Natural killer cell (primary cell): ENCODE measurements at regions of chr11 and their contacts with region 1.

Region 1: DNA sequence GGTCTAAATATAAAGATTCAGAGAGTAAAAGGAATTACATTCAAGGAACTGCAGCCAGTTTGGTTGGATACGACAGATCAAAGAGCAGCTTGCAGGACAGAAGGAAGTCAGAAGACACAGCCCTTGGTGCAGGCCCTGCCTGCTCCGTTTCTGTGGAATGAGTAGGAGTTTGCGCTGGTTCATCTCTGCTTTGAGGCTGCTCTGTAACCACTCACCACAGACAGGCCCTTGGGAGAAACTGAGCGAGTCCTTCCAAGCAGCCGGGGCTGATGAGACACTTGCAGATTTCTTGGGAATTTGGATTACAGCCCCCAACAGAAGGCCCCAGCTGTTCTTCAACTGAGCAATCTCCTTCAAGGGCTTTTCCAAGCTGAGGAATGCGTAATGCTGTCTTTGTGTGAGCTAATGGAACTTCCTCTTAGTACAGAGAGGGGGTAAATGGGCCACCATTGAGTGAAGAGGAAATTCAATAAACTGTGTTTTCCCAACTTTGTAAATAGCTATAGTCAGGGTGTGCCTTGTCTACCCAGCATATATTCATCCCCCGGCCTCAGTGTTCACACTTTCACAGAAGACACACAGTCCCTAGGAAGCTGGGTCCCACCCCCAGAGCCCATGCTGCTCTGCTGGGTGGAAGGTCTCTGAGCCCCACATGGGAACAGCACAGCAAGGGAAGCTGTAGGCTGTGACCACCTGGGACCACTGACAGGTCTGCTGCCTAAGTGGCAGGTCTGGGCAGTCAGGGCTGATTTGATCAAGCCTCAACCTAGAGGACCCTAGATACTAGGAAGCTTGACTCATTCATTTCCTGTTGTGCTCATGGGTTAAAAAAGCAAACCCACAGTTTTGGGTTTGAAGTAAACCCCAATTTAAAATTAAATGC is 16.6 kb downstream of the IL10RA start:
- DNase-seq: peak in 1 of 2 donors; percentile 59
- ATAC-seq: peak; percentile 14 to 43 (median 21)
- H3K4me3 ChIP-seq: no peak overlapping the region
- H3K4me3 Mint-ChIP-seq: peak overlapping the region; percentile 87
- H3K27ac ChIP-seq: peak overlapping the region; percentile 75
- H3K27ac Mint-ChIP-seq: peak overlapping the region; percentile 93 to 97
- H3K4me1 ChIP-seq: peaks cover 98% of the 10 kb centered on the region
- H3K4me1 Mint-ChIP-seq: peaks cover 90 to 96% of the 10 kb centered on the region in 2 donors
- H3K27me3 ChIP-seq: no peaks in the 10 kb centered on the region
- H3K27me3 Mint-ChIP-seq: no peaks in the 10 kb centered on the region
- CTCF ChIP-seq: no peak

Region 2: GRCh38 chr11:116750070-116750718 is 1252.6 kb before region 1 on chr11:
- intact Hi-C with region 1: no loop called
- DNase-seq: no peak
- ATAC-seq: no peak
- H3K4me3 ChIP-seq: no peak overlapping the region
- H3K4me3 Mint-ChIP-seq: no peak overlapping the region
- H3K27ac ChIP-seq: no peak overlapping the region
- H3K27ac Mint-ChIP-seq: no peak overlapping the region
- H3K4me1 ChIP-seq: no peaks in the 10 kb centered on the region
- H3K4me1 Mint-ChIP-seq: peaks cover 0 to 5% of the 10 kb centered on the region in 2 donors
- H3K27me3 ChIP-seq: no peaks in the 10 kb centered on the region
- H3K27me3 Mint-ChIP-seq: no peaks in the 10 kb centered on the region
- CTCF ChIP-seq: no peak

Region 3: GRCh38 chr11:117953024-117953671 is 49.6 kb before region 1 on chr11:
- intact Hi-C with region 1: loop called (anchors 2 kb)
- DNase-seq: peak in 1 of 2 donors; percentile 76
- ATAC-seq: peak; percentile 38 to 46 (median 41)
- H3K4me3 ChIP-seq: peak overlapping the region; percentile 11
- H3K4me3 Mint-ChIP-seq: peak overlapping the region; percentile 68
- H3K27ac ChIP-seq: peak overlapping the region; percentile 66
- H3K27ac Mint-ChIP-seq: peak overlapping the region; percentile 89 to 96
- H3K4me1 ChIP-seq: peaks cover 66% of the 10 kb centered on the region
- H3K4me1 Mint-ChIP-seq: peaks cover 68 to 72% of the 10 kb centered on the region in 2 donors
- H3K27me3 ChIP-seq: no peaks in the 10 kb centered on the region
- H3K27me3 Mint-ChIP-seq: no peaks in the 10 kb centered on the region
- CTCF ChIP-seq: no peak

Region 4: GRCh38 chr11:117969160-117969991 is 33.4 kb before region 1 on chr11:
- intact Hi-C with region 1: loop called (anchors 5 kb)
- DNase-seq: peak in 1 of 2 donors; percentile 51
- ATAC-seq: peak; percentile 73 to 84 (median 81)
- H3K4me3 ChIP-seq: no peak overlapping the region
- H3K4me3 Mint-ChIP-seq: peak overlapping the region; percentile 70
- H3K27ac ChIP-seq: peak overlapping the region; percentile 38
- H3K27ac Mint-ChIP-seq: peak overlapping the region; percentile 85
- H3K4me1 ChIP-seq: peaks cover 57% of the 10 kb centered on the region
- H3K4me1 Mint-ChIP-seq: peaks cover 51 to 57% of the 10 kb centered on the region in 2 donors
- H3K27me3 ChIP-seq: no peaks in the 10 kb centered on the region
- H3K27me3 Mint-ChIP-seq: no peaks in the 10 kb centered on the region
- CTCF ChIP-seq: no peak

Region 5: DNA sequence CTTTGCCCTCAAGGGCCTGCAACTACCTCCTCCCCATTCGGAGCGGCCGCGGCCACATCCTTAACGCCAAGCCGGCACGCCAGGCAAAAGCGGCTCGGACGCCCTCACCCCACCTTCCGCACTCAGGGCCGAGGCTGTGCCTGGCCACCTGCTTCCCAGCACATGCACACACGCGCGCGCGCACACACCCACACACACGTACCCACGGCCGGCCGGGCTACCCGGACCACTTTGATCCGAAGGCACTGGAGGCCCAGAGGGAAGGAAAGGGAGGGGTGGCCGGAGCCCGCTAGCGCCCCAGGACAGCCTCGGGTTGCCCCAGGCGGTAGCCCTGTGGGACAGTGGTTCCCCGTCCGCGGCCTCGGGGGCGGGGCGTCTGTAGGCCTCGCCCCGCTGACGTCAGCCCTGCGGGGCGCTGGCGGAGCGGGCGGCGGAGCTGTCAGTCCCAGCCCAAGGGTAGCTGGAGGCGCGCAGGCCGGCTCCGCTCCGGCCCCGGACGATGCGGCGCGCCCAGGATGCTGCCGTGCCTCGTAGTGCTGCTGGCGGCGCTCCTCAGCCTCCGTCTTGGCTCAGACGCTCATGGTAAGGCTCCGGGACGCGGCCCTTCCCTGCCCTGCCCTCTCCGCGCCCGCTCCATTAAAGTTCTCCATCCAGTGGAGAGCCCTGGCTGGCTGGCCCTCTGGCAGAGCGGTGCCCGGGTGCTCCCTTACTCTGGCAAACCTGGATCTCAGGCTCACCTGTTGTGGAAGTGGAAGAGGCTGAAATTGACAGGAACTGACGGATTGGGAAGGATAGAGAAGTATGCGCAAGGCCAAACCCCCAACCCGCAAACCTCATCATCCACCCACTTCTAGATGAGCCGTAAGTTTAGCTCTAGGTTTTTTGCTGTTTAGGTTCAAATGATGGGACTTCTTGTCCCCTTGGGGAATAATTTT is 16.6 kb before region 1 on chr11 and contains the start of gene IL10RA:
- intact Hi-C with region 1: loop called (anchors 1 kb)
- DNase-seq: peak; percentile 92
- ATAC-seq: peak; percentile 86 to 93 (median 89)
- H3K4me3 ChIP-seq: peak within 1 kb of the TSS; percentile 99
- H3K4me3 Mint-ChIP-seq: peak within 1 kb of the TSS; percentile 99
- H3K27ac ChIP-seq: peak within 1 kb of the TSS; percentile 96
- H3K27ac Mint-ChIP-seq: peak within 1 kb of the TSS; percentile 94 to 98
- H3K4me1 ChIP-seq: peaks cover 65% of the 10 kb centered on the region
- H3K4me1 Mint-ChIP-seq: peaks cover 78 to 80% of the 10 kb centered on the region in 2 donors
- H3K27me3 ChIP-seq: no peaks in the 10 kb centered on the region
- H3K27me3 Mint-ChIP-seq: no peaks in the 10 kb centered on the region
- CTCF ChIP-seq: no peak
- total RNA-seq, gene IL10RA: 263 to 286 (median 268) TPM

Region 6: DNA sequence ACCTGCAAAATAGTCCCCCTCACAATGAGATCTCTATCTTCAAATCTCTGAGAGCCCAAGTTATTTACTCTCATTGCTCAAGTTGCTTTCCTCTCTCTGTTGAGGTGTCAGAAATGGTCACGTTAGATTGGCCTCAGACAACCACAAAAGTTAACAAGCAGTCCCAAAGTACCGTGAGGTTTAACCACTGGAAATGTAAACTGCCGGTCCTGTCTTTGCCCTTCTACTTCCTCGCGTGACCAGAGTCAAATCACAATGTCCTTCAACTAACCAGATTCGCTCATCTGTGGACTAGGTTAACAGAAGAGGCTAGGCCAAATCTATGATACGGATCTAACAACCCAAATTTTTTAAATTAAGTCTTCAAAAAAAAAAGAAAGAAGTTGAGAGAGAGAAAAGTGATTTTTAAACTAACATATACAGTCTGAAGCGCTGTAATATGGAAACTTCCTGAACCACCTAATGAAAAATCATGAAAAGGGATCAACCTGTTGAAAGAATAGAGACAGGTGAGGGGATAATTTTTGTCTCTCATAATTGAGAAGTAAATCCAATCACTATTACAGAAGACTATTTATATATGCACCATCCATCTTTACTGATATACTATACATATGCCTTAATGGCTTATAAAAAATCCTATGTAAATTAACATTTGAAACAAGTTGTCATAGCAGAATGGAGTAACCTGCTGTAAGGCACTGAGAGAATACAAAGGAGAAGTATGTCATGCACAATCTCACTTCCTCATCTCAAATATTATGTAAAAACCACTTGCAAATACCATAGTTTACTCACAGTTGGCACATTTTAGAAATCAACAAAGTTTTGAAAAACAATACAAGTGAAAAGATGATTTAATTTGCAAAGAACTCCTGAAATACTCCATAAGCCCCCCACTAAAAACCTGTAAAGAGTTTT is 225.3 kb after region 1 on chr11:
- intact Hi-C with region 1: loop called (anchors 10 kb)
- DNase-seq: peak; percentile 40 to 75
- ATAC-seq: peak; percentile 43 to 85 (median 70)
- H3K4me3 ChIP-seq: no peak overlapping the region
- H3K4me3 Mint-ChIP-seq: peak overlapping the region; percentile 80
- H3K27ac ChIP-seq: peak overlapping the region; percentile 70
- H3K27ac Mint-ChIP-seq: peak overlapping the region in 1 of 2 donors; percentile 77
- H3K4me1 ChIP-seq: peaks cover 54% of the 10 kb centered on the region
- H3K4me1 Mint-ChIP-seq: peaks cover 39 to 49% of the 10 kb centered on the region in 2 donors
- H3K27me3 ChIP-seq: no peaks in the 10 kb centered on the region
- H3K27me3 Mint-ChIP-seq: peaks cover 9 to 23% of the 10 kb centered on the region in 2 donors
- CTCF ChIP-seq: no peak